ENCODE measurements at regions of chr11 and their contacts with region 1.

Region 1: GRCh38 chr11:27485930-27486773 is 13.6 kb upstream of the LGR4 start:
- DNase-seq: no peak
- H3K4me3 ChIP-seq: no peak overlapping the region
- H3K27ac ChIP-seq: no peak overlapping the region
- H3K4me1 ChIP-seq: no peaks in the 10 kb centered on the region
- H3K27me3 ChIP-seq: no peaks in the 10 kb centered on the region
- CTCF ChIP-seq: peak; percentile 89 to 91

Region 2: GRCh38 chr11:27183672-27184457 is 302.3 kb before region 1 on chr11:
- intact Hi-C with region 1: loop called (anchors 1 kb)
- DNase-seq: peak in 1 of 2 donors; percentile 51
- H3K4me3 ChIP-seq: no peak overlapping the region
- H3K27ac ChIP-seq: no peak overlapping the region
- H3K4me1 ChIP-seq: no peaks in the 10 kb centered on the region
- H3K27me3 ChIP-seq: no peaks in the 10 kb centered on the region
- CTCF ChIP-seq: peak; percentile 66 to 84

Region 3: DNA sequence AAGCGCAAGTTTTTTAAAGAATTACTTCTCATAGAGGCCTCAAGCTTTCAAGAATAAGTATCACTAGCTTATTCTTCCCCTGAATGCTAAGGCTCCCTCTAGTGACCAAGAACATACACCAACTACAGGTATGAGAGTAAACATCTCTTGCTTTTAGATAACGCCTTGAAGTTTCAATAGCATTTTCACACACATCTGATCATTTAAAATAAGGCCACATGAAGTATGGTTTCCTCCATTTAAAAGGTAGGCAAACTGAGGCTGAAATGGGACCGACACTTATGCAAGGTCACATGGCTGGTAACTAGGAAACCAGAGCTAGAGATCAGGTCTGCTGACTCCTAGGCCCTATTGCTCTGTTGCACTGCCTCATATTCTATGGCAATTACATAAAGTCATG is 189.7 kb before region 1 on chr11:
- intact Hi-C with region 1: loop called (anchors 10 kb)
- DNase-seq: no peak
- H3K4me3 ChIP-seq: no peak overlapping the region
- H3K27ac ChIP-seq: no peak overlapping the region
- H3K4me1 ChIP-seq: no peaks in the 10 kb centered on the region
- H3K27me3 ChIP-seq: no peaks in the 10 kb centered on the region
- CTCF ChIP-seq: peak; percentile 51 to 58

Measured in tibial artery (tissue), 4 donors.